Activated CD4-positive, alpha-beta memory T cell treated with anti-CD3 and anti-CD28 coated beads, Interleukin-2, amount 10 ng/mL, durations not matched to agents 7 days and 5 days (primary cell): ENCODE measurements at regions of chr15 and their contacts with region 1.

Region 1: GRCh38 chr15:77013776-77014131 is 18.8 kb downstream of the PSTPIP1 start:
- DNase-seq: peak; percentile 93
- H3K4me3 Mint-ChIP-seq: peak overlapping the region; percentile 68
- H3K27ac Mint-ChIP-seq: peak overlapping the region; percentile 96
- H3K4me1 Mint-ChIP-seq: peaks cover 90% of the 10 kb centered on the region
- H3K27me3 Mint-ChIP-seq: no peaks in the 10 kb centered on the region

Region 2: GRCh38 chr15:76846782-76847181 is 167.0 kb before region 1 on chr15:
- CTCF ChIA-PET with region 1: no interaction called
- POLR2A ChIA-PET with region 1: no interaction called
- DNase-seq: no peak
- H3K4me3 Mint-ChIP-seq: no peak overlapping the region
- H3K27ac Mint-ChIP-seq: no peak overlapping the region
- H3K4me1 Mint-ChIP-seq: peaks cover 2% of the 10 kb centered on the region
- H3K27me3 Mint-ChIP-seq: no peaks in the 10 kb centered on the region

Region 3: DNA sequence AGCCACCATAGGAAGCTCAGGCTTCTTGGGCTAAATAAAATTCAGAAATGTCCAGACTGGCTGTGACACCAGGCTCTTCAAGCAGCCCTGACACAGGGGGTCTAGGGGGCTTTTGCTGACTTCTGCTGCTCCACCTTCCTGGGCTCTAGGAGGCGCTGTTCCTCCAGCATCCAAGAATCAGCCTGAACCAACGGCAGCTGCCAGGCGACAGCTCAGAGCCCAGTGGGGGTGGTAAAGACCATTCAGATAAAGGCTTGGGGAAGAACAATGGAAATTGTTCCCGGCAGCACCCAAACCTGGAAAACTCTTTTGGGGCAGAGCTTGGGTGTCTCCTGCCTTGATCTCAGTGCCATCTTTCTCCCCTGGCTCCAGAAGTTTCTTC is 40.4 kb before region 1 on chr15:
- CTCF ChIA-PET with region 1: interaction called, 21 read pairs
- POLR2A ChIA-PET with region 1: interaction called, 3 read pairs
- DNase-seq: peak; percentile 71
- H3K4me3 Mint-ChIP-seq: no peak overlapping the region
- H3K27ac Mint-ChIP-seq: no peak overlapping the region
- H3K4me1 Mint-ChIP-seq: peaks cover 25% of the 10 kb centered on the region
- H3K27me3 Mint-ChIP-seq: peaks cover 1% of the 10 kb centered on the region

Region 4: DNA sequence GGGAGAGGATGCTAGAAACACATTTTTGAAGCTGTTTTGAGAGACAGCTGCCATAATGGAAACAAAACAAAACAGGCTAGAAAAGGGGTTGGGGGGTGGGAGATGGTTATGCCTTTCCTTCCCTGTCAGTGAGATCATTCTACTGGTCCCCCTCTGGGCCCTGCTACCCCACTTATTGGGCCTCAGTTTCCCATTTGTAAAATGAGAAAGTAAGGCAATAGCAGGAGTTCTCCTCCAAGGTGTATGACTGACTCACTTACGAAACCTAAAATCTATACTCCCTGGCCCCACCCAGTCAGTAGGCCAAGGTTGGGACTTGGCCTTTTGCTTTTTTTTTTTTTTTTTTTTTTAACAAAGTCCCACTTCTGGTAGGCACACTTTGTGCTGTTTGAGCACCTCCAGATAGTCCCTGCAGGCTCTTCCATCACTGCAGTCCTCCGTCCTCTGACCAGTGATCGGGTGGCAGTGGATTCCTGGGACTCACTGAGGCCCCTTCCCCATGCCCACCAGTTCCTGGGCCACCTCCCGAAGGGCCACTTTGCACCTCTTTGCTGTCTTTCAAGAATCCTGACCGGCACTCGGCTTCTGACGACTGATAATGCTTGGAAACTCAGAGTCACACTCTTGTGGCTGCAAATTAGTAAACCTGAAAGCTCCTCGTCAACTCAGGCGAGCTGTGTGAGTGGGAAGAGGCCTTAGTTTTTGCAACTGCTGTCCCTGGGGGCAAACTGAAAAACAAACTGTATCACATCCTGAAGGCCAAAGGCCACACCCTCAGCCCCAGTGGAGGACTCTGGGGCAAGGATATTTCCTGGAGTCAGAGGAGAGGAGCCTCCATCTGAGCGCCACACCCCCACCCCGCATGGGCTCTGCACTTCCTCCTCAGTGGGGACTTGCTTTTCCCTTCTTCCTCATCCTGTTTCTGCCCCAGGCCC is 25.6 kb before region 1 on chr15:
- CTCF ChIA-PET with region 1: interaction called, 8 read pairs
- POLR2A ChIA-PET with region 1: interaction called, 41 read pairs
- DNase-seq: peak; percentile 84
- H3K4me3 Mint-ChIP-seq: peak overlapping the region; percentile 52
- H3K27ac Mint-ChIP-seq: peak overlapping the region; percentile 99
- H3K4me1 Mint-ChIP-seq: peaks cover 69% of the 10 kb centered on the region
- H3K27me3 Mint-ChIP-seq: no peaks in the 10 kb centered on the region

Region 5: GRCh38 chr15:76994971-76995945 is 18.5 kb before region 1 on chr15 and contains the start of gene PSTPIP1:
- CTCF ChIA-PET with region 1: interaction called, 41 read pairs
- POLR2A ChIA-PET with region 1: interaction called, 188 read pairs
- DNase-seq: peak; percentile 84
- H3K4me3 Mint-ChIP-seq: peak within 1 kb of the TSS; percentile 92
- H3K27ac Mint-ChIP-seq: peak within 1 kb of the TSS; percentile 98
- H3K4me1 Mint-ChIP-seq: peaks cover 78% of the 10 kb centered on the region
- H3K27me3 Mint-ChIP-seq: no peaks in the 10 kb centered on the region
- total RNA-seq, gene PSTPIP1: 181 to 187 TPM

Region 6: DNA sequence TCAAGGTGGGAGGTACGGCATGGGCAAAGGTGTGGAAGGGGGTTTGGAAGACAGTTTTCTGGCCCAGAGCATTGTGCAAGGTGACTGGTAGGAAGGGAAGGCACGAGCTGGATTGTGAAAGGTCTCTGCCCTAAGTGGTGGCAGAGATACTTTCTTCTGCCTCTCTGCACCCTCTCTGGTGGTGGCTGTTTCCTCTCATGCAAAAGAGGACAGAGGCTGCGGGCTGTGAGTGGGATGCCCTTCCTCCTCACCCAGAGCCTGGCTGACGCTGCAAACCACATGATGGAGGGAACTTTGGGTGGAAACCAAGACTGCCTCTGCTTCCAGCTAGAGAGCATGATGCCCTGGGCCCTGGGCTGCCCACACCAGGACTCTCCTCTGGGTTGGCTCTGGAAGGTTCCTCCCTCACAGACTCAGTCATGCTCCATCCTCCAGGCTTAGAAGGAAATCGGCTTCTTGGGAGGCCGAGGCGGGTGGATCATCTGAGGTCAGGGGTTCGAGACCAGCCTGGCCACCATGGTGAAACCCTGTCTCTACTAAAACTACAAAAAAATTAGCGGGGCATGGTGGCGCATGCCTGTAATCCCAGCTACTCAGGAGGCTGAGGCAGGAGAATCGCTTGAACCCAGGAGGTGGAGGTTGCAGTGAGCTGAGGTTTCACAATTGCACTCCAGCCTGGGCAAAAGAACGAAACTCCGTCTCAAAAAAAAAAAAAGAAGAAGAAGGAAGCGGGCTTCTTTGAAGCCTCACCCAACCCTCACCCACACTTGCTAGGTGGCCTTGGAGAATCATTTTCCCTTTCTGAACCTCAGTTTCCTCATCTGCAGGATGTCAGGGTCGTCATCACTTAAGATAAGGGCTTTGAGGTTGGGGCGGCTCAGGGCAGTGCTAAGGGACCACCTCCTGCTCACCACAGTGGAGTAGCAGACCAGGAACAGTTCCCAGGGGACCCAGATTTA is 10.5 kb before region 1 on chr15:
- CTCF ChIA-PET with region 1: interaction called, 41 read pairs
- POLR2A ChIA-PET with region 1: interaction called, 188 read pairs
- DNase-seq: peak; percentile 87
- H3K4me3 Mint-ChIP-seq: peak overlapping the region; percentile 65
- H3K27ac Mint-ChIP-seq: peak overlapping the region; percentile 92
- H3K4me1 Mint-ChIP-seq: peaks cover 87% of the 10 kb centered on the region
- H3K27me3 Mint-ChIP-seq: no peaks in the 10 kb centered on the region

Region 7: DNA sequence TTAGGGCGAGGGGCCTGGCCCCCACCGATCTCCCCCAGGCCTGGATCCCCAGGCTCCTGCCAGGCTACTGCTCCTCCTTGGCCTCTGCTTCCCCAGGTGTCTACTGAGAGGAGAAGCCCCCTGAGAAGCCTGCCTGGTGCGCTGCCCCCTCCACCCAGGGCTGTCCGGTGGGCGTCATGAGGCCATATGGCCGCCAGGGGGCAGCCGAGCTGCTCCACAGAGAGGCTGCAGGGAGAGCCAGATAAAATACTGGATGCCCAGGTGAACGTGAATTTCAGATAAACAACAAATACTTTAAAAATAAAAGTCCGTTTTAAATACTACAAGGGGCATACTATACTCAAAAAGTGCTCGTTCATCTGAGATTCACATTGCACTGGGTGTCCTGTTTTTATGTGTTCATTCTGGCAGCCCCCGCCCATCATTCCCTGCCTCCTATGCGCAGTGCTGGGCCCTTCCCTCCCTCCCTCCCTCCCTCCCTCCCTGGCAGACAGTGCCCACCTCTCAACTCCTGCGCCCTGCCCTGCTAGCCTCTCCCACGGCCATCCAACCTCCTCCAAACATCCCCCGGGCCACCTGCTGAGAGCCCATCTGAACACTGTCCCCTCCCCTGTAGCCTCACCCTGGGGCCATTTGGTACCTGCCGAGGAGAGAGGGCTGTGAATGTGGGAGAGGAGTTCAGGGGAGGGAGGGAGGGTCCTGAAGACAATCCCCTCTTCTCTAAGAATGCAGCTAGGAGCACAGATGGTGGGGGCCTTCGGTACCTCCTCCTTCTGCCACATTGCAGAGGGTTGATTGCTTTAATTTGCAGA is 10.7 kb after region 1 on chr15:
- CTCF ChIA-PET with region 1: interaction called, 7 read pairs
- POLR2A ChIA-PET with region 1: interaction called, 34 read pairs
- DNase-seq: peak; percentile 66
- H3K4me3 Mint-ChIP-seq: no peak overlapping the region
- H3K27ac Mint-ChIP-seq: peak overlapping the region; percentile 70
- H3K4me1 Mint-ChIP-seq: peaks cover 57% of the 10 kb centered on the region
- H3K27me3 Mint-ChIP-seq: no peaks in the 10 kb centered on the region

Region 8: GRCh38 chr15:77144492-77145070 is 130.8 kb after region 1 on chr15:
- CTCF ChIA-PET with region 1: no interaction called
- POLR2A ChIA-PET with region 1: no interaction called
- DNase-seq: no peak
- H3K4me3 Mint-ChIP-seq: no peak overlapping the region
- H3K27ac Mint-ChIP-seq: no peak overlapping the region
- H3K4me1 Mint-ChIP-seq: peaks cover 5% of the 10 kb centered on the region
- H3K27me3 Mint-ChIP-seq: no peaks in the 10 kb centered on the region